CD4-positive, alpha-beta T cell (primary cell): ENCODE measurements at regions of chr9 and their contacts with region 1.

Region 1: DNA sequence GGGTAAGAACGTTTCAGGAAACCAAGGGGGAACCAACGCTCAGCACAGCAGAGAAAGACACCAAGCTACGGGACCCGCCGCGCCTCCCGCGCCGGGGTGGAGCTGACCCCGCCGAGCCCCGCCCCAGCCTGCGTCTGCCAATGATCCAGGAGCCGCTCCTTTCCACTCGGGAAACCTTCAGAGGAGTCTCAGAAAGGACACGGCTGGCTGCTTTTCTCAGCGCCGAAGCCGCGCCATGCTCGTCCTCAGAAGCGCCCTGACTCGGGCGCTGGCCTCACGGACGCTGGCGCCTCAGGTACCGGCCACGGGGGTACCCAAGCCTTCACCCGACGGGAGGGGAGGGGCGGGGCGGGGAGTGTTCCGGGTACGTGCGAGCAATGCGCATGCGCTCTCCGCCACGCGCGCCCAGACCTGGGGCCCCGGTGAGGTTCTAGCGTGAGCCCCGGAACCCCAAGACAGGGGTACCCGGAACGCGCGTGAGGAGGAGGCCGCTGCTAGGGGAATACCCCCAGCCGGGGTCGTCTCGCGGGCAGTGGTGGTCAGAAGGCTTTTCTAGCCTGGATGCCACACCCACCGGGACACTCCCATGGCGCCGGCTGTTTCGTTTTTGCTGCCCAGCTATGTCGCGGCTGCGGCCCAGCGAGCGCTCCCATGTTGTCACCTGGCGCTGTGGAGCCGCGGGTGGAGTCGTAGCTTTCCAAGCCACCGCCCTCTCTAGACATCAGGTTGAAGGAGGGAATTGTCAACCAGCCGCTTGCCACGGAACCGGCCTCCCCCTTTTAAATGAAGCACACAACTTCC is at the start of gene NIPSNAP3A:
- DNase-seq: peak; percentile 77 to 94 (median 84)
- ATAC-seq: peak; percentile 86
- H3K4me3 ChIP-seq: peak within 1 kb of the TSS; percentile 88
- H3K4me3 Mint-ChIP-seq: peak within 1 kb of the TSS; percentile 96
- H3K27ac ChIP-seq: peak within 1 kb of the TSS; percentile 74 to 89
- H3K27ac Mint-ChIP-seq: peak within 1 kb of the TSS; percentile 96
- H3K4me1 ChIP-seq: peaks cover 17% of the 10 kb centered on the region
- H3K4me1 Mint-ChIP-seq: peaks cover 24% of the 10 kb centered on the region
- H3K27me3 ChIP-seq: no peaks in the 10 kb centered on the region
- H3K27me3 Mint-ChIP-seq: no peaks in the 10 kb centered on the region
- CTCF ChIP-seq: no peak
- total RNA-seq, gene NIPSNAP3A: 9.0 to 10.6 TPM

Region 2: DNA sequence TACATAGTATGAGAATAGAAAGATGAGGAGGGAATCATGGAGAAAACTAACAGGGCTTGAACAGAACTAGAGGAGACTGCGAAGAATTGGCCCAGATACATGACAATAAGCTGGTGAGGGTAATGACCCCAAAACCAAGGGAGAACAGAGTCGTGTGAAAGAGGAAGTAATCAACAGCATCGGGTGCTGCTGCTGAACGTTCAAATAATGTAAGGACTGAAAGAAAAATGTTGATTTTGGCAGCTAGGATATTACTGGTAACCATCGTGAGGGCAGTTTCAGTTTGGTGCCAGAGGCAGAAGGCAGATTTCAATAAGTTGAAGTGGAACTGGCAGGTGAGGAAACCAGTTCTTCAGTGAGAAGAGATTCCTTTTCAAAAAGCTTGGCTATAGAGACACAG is 720.5 kb before region 1 on chr9:
- CTCF ChIA-PET with region 1: no interaction called
- POLR2A ChIA-PET with region 1: no interaction called
- intact Hi-C with region 1: loop called (anchors 10 kb)
- DNase-seq: no peak
- ATAC-seq: no peak
- H3K4me3 ChIP-seq: no peak overlapping the region
- H3K4me3 Mint-ChIP-seq: no peak overlapping the region
- H3K27ac ChIP-seq: no peak overlapping the region
- H3K27ac Mint-ChIP-seq: no peak overlapping the region
- H3K4me1 ChIP-seq: no peaks in the 10 kb centered on the region
- H3K4me1 Mint-ChIP-seq: peaks cover 27% of the 10 kb centered on the region
- H3K27me3 ChIP-seq: peaks cover 0 to 8% of the 10 kb centered on the region in 2 experiments
- H3K27me3 Mint-ChIP-seq: no peaks in the 10 kb centered on the region
- CTCF ChIP-seq: no peak

Region 3: DNA sequence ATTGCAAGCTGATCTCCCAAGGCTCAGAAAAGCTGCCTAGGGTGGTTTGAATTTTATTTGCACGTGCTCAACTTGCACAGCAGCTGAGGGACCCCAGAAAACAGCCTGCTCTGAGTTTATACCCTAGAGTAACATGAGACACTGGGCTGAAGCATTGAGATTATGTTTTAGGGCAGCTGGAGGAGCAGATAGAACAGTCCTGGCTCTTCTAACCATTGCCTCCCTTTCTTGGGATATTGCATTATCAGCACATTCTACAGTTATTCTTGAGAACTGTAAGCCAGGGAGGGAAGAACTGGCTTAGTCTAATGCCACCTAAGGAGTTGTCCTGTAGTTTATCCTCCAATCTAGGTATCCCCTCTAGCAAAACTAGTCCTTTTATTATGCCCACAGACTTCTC is 643.4 kb before region 1 on chr9:
- CTCF ChIA-PET with region 1: no interaction called
- POLR2A ChIA-PET with region 1: no interaction called
- intact Hi-C with region 1: loop called in 1 of 2 experiments (anchors 5 kb)
- DNase-seq: no peak
- ATAC-seq: no peak
- H3K4me3 ChIP-seq: no peak overlapping the region
- H3K4me3 Mint-ChIP-seq: no peak overlapping the region
- H3K27ac ChIP-seq: no peak overlapping the region
- H3K27ac Mint-ChIP-seq: no peak overlapping the region
- H3K4me1 ChIP-seq: no peaks in the 10 kb centered on the region
- H3K4me1 Mint-ChIP-seq: no peaks in the 10 kb centered on the region
- H3K27me3 ChIP-seq: no peaks in the 10 kb centered on the region
- H3K27me3 Mint-ChIP-seq: no peaks in the 10 kb centered on the region
- CTCF ChIP-seq: no peak

Region 4: DNA sequence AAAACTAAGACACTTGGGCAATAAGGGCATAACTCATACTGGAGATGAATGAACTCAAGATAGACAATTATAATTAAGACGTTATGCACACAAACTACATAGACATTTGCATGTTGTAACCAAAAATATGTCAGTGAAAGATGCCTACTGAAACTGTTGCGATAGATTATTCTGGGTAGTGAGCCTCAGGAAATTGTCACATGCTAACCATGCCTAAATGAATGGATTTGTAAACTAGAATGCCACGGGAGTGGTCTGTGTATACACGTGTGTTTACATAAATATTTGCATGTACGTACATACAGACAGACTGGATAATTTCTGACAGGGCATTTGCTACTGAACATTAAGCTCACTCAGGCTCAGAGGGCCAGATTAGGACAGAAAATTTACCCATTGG is 17.4 kb after region 1 on chr9:
- CTCF ChIA-PET with region 1: no interaction called
- POLR2A ChIA-PET with region 1: interaction called, 29 read pairs
- intact Hi-C with region 1: no loop called
- DNase-seq: no peak
- ATAC-seq: no peak
- H3K4me3 ChIP-seq: no peak overlapping the region
- H3K4me3 Mint-ChIP-seq: peak overlapping the region; percentile 92
- H3K27ac ChIP-seq: no peak overlapping the region
- H3K27ac Mint-ChIP-seq: no peak overlapping the region
- H3K4me1 ChIP-seq: peaks cover 11% of the 10 kb centered on the region
- H3K4me1 Mint-ChIP-seq: peaks cover 15% of the 10 kb centered on the region
- H3K27me3 ChIP-seq: no peaks in the 10 kb centered on the region
- H3K27me3 Mint-ChIP-seq: no peaks in the 10 kb centered on the region
- CTCF ChIP-seq: no peak

Region 5: DNA sequence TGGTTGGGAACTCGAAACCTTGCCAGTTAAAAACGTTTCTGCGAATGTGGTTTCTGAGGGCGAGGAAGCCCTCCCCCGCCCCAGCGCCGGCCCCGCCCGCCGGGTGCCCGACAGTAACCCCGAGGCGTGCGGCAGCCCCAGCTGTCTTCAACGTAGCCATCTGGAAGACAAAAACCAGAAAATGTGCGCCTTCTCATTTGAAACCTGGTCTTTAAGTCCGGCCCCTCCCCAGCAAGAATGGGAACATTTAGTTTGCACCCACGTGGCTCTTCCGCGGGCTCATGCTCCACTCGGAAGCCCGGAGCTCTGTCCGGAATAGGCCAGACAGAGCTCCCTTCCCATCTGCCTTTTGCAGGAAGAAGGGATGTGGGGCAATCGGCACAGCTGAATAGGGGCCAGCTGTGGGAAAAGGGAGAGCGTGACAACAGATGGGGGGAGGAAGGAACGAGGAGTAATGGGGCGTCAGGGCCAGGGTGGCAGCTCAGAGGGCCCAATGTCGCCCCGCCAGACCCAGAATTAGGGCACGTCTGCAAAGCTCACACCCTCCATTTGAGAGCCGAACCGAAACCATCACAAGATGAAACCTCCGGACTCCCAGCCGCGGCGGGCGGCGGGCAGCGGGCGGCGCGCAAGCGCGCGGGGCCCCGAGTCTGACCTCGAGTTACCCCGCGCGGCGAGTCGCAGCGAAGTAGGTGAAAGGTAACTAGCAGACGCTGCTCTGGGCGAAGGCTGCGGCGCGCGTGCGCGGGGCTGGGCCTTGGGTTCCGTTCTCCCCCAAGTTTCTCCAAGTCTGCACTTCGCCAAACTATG is 243.6 kb after region 1 on chr9:
- CTCF ChIA-PET with region 1: no interaction called
- POLR2A ChIA-PET with region 1: no interaction called
- intact Hi-C with region 1: loop called in 1 of 2 experiments (anchors 10 kb)
- DNase-seq: peak; percentile 64 to 93 (median 80)
- ATAC-seq: peak; percentile 78
- H3K4me3 ChIP-seq: peak overlapping the region; percentile 72
- H3K4me3 Mint-ChIP-seq: peak overlapping the region; percentile 98
- H3K27ac ChIP-seq: peak overlapping the region; percentile 93
- H3K27ac Mint-ChIP-seq: peak overlapping the region; percentile 100
- H3K4me1 ChIP-seq: peaks cover 38% of the 10 kb centered on the region
- H3K4me1 Mint-ChIP-seq: peaks cover 41% of the 10 kb centered on the region
- H3K27me3 ChIP-seq: no peaks in the 10 kb centered on the region
- H3K27me3 Mint-ChIP-seq: peaks cover 19% of the 10 kb centered on the region
- CTCF ChIP-seq: no peak

Region 6: GRCh38 chr9:105694190-105694847 is 946.6 kb after region 1 on chr9 and contains the start of gene TMEM38B:
- CTCF ChIA-PET with region 1: no interaction called
- POLR2A ChIA-PET with region 1: interaction called, 3 read pairs
- intact Hi-C with region 1: loop called (anchors 5 kb)
- DNase-seq: peak; percentile 50 to 93 (median 74)
- ATAC-seq: peak; percentile 86
- H3K4me3 ChIP-seq: peak within 1 kb of the TSS; percentile 86
- H3K4me3 Mint-ChIP-seq: peak within 1 kb of the TSS; percentile 93
- H3K27ac ChIP-seq: peak within 1 kb of the TSS in 1 of 2 donors; percentile 22
- H3K27ac Mint-ChIP-seq: peak within 1 kb of the TSS; percentile 73
- H3K4me1 ChIP-seq: peaks cover 7% of the 10 kb centered on the region
- H3K4me1 Mint-ChIP-seq: peaks cover 40% of the 10 kb centered on the region
- H3K27me3 ChIP-seq: peaks cover 9 to 24% of the 10 kb centered on the region in 2 experiments
- H3K27me3 Mint-ChIP-seq: peaks cover 30% of the 10 kb centered on the region
- CTCF ChIP-seq: no peak
- total RNA-seq, gene TMEM38B: 12.9 to 13.9 TPM